Posterior vena cava (tissue), 2 donors: ENCODE measurements at regions of chr11 and their contacts with region 1.

Region 1: GRCh38 chr11:102950622-102951107 is 4.9 kb downstream of the MMP13 start:
- DNase-seq: no peak

Region 2: GRCh38 chr11:102900346-102900745 is 50.3 kb before region 1 on chr11:
- intact Hi-C with region 1: no loop called
- DNase-seq: no peak

Region 3: GRCh38 chr11:102933627-102934026 is 17.0 kb before region 1 on chr11:
- intact Hi-C with region 1: loop called in 1 of 2 experiments (anchors 1 kb)
- DNase-seq: no peak